Activated CD4-positive, alpha-beta memory T cell treated with anti-CD3 and anti-CD28 coated beads, Interleukin-2, amount 10 ng/mL, durations not matched to agents 7 days and 5 days (primary cell): ENCODE measurements at regions of chr6 and their contacts with region 1.

Region 1: GRCh38 chr6:27518881-27519795 is 46.2 kb upstream of the ZNF184 start:
- DNase-seq: peak; percentile 52
- H3K4me3 Mint-ChIP-seq: peak overlapping the region; percentile 82
- H3K27ac Mint-ChIP-seq: peak overlapping the region; percentile 72
- H3K4me1 Mint-ChIP-seq: peaks cover 24% of the 10 kb centered on the region
- H3K27me3 Mint-ChIP-seq: peaks cover 31% of the 10 kb centered on the region

Region 2: GRCh38 chr6:27505209-27506027 is 13.7 kb before region 1 on chr6:
- CTCF ChIA-PET with region 1: interaction called, 22 read pairs
- POLR2A ChIA-PET with region 1: interaction called, 5 read pairs
- DNase-seq: peak; percentile 37
- H3K4me3 Mint-ChIP-seq: no peak overlapping the region
- H3K27ac Mint-ChIP-seq: no peak overlapping the region
- H3K4me1 Mint-ChIP-seq: peaks cover 31% of the 10 kb centered on the region
- H3K27me3 Mint-ChIP-seq: peaks cover 40% of the 10 kb centered on the region

Region 3: DNA sequence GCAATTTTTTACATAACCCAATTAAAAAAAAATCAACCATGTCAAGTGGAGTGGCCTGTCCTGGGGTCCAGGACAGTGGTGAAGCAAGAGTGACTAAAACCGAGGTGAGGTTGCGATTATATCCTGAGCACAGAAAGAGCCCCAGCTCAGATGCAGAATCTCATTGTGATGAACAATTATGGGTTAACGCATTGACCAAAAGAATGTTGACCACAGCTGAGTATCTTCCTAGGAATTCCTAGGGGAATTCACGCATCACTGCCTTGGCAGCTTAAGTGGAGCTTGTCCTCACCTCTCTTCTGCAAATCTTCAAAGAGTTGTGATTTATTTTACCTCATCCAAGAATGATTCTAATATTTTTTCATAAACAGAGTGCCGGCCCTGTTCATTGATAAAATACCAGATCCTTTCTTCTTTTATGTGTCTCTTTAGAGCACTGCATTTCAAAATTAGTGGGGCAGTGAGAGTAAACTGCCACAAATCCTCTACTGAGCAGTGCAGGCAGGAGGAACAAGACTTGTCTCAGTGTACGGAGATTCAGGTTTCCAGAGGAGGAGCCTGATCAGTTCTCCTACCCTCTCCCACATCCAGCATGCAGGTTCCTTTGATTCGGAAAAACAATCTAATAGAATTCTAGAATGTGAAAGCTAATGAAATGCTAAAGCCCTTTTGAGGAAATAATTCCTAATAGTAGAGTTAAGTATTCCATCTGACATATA is 13.8 kb after region 1 on chr6:
- CTCF ChIA-PET with region 1: no interaction called
- POLR2A ChIA-PET with region 1: no interaction called
- DNase-seq: no peak
- H3K4me3 Mint-ChIP-seq: no peak overlapping the region
- H3K27ac Mint-ChIP-seq: no peak overlapping the region
- H3K4me1 Mint-ChIP-seq: no peaks in the 10 kb centered on the region
- H3K27me3 Mint-ChIP-seq: peaks cover 40% of the 10 kb centered on the region

Region 4: GRCh38 chr6:27562027-27562410 is 42.9 kb after region 1 on chr6:
- CTCF ChIA-PET with region 1: no interaction called
- POLR2A ChIA-PET with region 1: no interaction called
- DNase-seq: no peak
- H3K4me3 Mint-ChIP-seq: no peak overlapping the region
- H3K27ac Mint-ChIP-seq: no peak overlapping the region
- H3K4me1 Mint-ChIP-seq: peaks cover 9% of the 10 kb centered on the region
- H3K27me3 Mint-ChIP-seq: peaks cover 81% of the 10 kb centered on the region

Region 5: GRCh38 chr6:27608916-27609883 is 90.1 kb after region 1 on chr6:
- CTCF ChIA-PET with region 1: interaction called, 20 read pairs
- POLR2A ChIA-PET with region 1: no interaction called
- DNase-seq: no peak
- H3K4me3 Mint-ChIP-seq: no peak overlapping the region
- H3K27ac Mint-ChIP-seq: no peak overlapping the region
- H3K4me1 Mint-ChIP-seq: peaks cover 14% of the 10 kb centered on the region
- H3K27me3 Mint-ChIP-seq: peaks cover 38% of the 10 kb centered on the region

Region 6: DNA sequence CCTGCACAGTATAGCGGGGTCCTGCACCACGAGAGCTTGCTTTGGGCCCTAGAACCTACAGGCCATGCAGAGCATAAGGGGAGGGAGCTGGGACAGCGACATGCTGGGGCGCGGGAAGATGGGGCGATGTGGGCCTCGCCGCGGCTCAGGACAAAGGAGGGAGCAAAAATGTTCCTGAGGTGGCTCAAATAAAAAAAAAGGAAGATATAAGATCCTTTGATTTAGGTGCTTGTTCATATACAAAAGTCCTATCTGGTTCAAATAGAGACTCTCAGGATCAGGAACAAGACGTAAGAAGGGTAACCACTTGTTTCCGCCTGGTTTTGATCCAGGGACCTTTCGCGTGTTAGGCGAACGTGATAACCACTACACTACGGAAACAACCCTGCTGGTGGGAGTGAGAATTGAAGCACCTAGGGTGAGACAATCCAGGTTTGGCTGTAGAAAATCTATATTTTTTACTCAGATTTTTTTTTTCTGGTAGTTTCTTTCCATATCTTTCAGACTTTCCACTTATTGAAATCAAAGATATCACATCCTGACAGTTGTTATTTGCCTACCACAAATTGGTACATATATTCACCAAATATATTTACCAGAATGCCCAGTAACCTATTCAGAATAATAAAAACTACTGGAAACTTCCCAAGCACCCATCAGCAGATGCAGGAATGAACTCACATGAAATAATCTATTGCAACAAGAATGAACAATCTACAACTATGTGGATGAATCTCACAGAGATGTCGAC is 131.7 kb after region 1 on chr6:
- CTCF ChIA-PET with region 1: no interaction called
- POLR2A ChIA-PET with region 1: no interaction called
- DNase-seq: peak; percentile 50
- H3K4me3 Mint-ChIP-seq: no peak overlapping the region
- H3K27ac Mint-ChIP-seq: no peak overlapping the region
- H3K4me1 Mint-ChIP-seq: peaks cover 14% of the 10 kb centered on the region
- H3K27me3 Mint-ChIP-seq: peaks cover 24% of the 10 kb centered on the region